Endothelial cell of umbilical vein (primary cell): ENCODE measurements at regions of chr9 and their contacts with region 1.

Region 1: GRCh38 chr9:93566408-93567270 is 9.7 kb upstream of the PHF2 start:
- DNase-seq: peak; percentile 98
- H3K4me3 ChIP-seq: peak overlapping the region; percentile 49 to 64 (median 52)
- H3K27ac ChIP-seq: peak overlapping the region; percentile 84
- H3K4me1 ChIP-seq: peaks cover 16% of the 10 kb centered on the region
- H3K27me3 ChIP-seq: no peaks in the 10 kb centered on the region
- CTCF ChIP-seq: peak; percentile 97 to 99
- POLR2A ChIP-seq: peak; percentile 98

Region 2: GRCh38 chr9:93159601-93160471 is 406.8 kb before region 1 on chr9:
- CTCF ChIA-PET with region 1: no interaction called
- POLR2A ChIA-PET with region 1: no interaction called
- dilution Hi-C with region 1: no loop called
- intact Hi-C with region 1: loop called (anchors 1 kb)
- DNase-seq: peak; percentile 66
- H3K4me3 ChIP-seq: no peak overlapping the region
- H3K27ac ChIP-seq: no peak overlapping the region
- H3K4me1 ChIP-seq: no peaks in the 10 kb centered on the region
- H3K27me3 ChIP-seq: no peaks in the 10 kb centered on the region
- CTCF ChIP-seq: peak; percentile 98
- POLR2A ChIP-seq: no peak

Region 3: GRCh38 chr9:93415176-93415690 is 151.4 kb before region 1 on chr9:
- CTCF ChIA-PET with region 1: no interaction called
- POLR2A ChIA-PET with region 1: no interaction called
- dilution Hi-C with region 1: no loop called
- intact Hi-C with region 1: no loop called
- DNase-seq: no peak
- H3K4me3 ChIP-seq: no peak overlapping the region
- H3K27ac ChIP-seq: no peak overlapping the region
- H3K4me1 ChIP-seq: no peaks in the 10 kb centered on the region
- H3K27me3 ChIP-seq: peaks cover 0 to 4% of the 10 kb centered on the region in 2 experiments
- CTCF ChIP-seq: no peak
- POLR2A ChIP-seq: no peak

Region 4: DNA sequence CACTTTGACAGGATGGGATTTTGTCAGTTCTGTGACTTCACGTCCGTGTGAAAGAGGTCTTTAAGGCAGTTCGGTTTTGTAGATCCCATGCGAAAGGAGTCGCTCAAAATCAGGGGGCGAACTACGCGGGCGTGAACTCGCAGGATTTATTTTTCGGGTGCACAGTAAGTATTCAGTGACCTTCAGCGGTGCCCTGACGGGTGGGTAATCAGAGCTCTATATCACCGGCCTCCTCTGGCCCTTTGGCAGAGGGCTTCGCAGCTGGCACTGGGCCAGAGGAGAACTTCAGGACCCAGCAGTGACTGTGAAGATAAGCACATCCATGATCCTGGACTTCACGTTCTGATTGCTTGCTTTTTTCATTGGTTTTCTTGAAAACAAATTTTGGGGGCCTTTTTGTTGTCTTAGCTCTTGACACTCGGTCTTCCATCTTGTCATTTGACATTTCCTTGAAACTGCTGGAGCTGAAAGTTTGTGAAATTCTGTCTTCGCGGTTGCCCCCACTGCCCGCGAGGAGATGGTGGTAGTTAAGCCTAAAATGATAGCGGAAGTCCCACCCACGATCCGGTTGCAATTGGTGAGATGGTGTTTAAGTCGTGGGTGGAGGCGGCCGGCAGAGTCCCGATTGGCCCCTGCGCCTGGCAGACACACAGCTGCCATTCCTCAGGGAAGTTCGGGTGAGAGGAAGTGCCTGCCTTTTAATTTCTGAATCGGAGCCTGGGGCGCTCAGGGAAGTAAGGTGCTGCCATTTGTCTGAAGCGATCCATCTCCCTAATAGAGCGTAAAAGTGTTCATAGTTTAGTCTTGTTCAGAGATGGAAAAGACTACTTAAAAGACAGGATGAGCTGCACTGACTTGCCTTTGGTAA is 113.4 kb before region 1 on chr9 and contains the start of gene FAM120AOS:
- CTCF ChIA-PET with region 1: interaction called, 46 read pairs
- POLR2A ChIA-PET with region 1: interaction called, 6 read pairs
- dilution Hi-C with region 1: no loop called
- intact Hi-C with region 1: loop called (anchors 1 kb)
- DNase-seq: peak; percentile 94
- H3K4me3 ChIP-seq: peak within 1 kb of the TSS; percentile 85 to 99 (median 88)
- H3K27ac ChIP-seq: peak within 1 kb of the TSS; percentile 58
- H3K4me1 ChIP-seq: peaks cover 11% of the 10 kb centered on the region
- H3K27me3 ChIP-seq: no peaks in the 10 kb centered on the region
- CTCF ChIP-seq: no peak
- POLR2A ChIP-seq: no peak
- total RNA-seq, gene FAM120AOS: 28.8 and 32.4 TPM in 2 replicates

Region 5: GRCh38 chr9:93479726-93480125 is 86.9 kb before region 1 on chr9:
- CTCF ChIA-PET with region 1: interaction called, 12 read pairs
- POLR2A ChIA-PET with region 1: interaction called, 3 read pairs
- dilution Hi-C with region 1: no loop called
- intact Hi-C with region 1: no loop called
- DNase-seq: no peak
- H3K4me3 ChIP-seq: no peak overlapping the region
- H3K27ac ChIP-seq: no peak overlapping the region
- H3K4me1 ChIP-seq: peaks cover 2% of the 10 kb centered on the region
- H3K27me3 ChIP-seq: no peaks in the 10 kb centered on the region
- CTCF ChIP-seq: no peak
- POLR2A ChIP-seq: no peak

Region 6: DNA sequence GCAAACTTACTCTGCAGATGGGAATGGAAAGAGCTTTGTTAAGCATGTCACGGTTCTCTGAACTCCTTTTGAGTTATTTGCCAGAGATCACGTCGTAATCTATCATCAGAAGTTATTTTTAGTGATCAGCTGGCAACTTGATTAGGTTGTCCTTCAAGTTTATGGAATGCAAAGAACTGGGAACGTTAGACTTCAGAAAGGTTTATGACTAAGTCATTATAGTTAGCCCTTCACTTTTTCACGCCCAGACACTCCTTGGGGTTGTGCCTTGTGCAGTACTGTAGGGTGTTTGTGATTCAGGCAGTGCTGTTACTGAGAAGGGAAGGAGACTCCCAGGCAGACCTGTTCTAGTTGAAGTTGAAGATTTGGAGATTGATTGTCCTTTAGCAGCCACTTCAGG is 17.0 kb before region 1 on chr9:
- CTCF ChIA-PET with region 1: interaction called, 14 read pairs
- POLR2A ChIA-PET with region 1: no interaction called
- dilution Hi-C with region 1: no loop called
- intact Hi-C with region 1: no loop called
- DNase-seq: no peak
- H3K4me3 ChIP-seq: no peak overlapping the region
- H3K27ac ChIP-seq: no peak overlapping the region
- H3K4me1 ChIP-seq: no peaks in the 10 kb centered on the region
- H3K27me3 ChIP-seq: no peaks in the 10 kb centered on the region
- CTCF ChIP-seq: no peak
- POLR2A ChIP-seq: no peak